Gastrocnemius medialis (tissue), 4 donors: ENCODE measurements at regions of chr14 and their contacts with region 1.

Region 1: DNA sequence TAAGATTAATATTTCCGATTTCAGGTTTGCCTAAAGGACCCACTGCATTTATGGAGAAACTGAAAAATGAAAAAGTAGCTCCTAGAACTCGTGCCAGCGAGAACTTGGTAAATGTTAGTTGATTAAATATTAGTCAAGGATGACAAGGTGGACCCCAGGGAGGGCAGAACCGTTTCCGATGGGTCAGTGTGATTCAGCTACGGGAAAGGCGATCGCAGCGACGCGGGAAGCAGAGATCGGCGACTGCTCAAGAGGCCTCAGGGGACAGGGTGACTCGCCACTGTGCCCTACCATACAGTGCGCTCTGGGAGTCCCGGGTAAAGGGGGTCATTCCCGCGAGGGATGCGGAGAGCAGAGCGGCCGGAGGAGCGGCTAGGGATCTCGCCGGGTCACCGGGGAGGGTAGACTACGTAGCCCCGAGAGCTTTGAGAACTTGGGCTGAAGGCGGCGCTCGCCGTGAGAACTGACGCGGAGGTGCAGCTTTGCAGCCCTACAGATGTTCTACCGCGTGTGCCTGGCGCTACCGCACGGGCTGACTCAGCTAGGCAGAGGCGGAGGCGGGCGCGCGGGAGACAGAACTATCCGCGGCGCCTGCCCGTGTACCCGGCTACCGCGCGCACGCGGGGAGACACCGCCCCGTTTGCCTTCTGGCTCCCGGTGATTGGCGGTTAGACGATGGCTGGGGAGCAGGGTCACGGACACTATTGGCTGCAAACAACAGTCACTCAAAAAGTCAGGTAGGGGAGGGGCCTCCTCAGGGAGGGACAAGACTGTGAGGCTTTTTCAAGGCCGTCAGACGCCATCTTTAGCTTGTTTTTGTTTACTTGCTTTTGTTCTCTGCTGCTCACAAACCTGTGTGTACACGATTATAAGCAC is 3.2 kb downstream of the C14orf93 start:
- DNase-seq: peak; percentile 98
- ATAC-seq: peak; percentile 98 to 99
- H3K4me3 ChIP-seq: peak overlapping the region; percentile 72 to 94 (median 78)
- H3K27ac ChIP-seq: peak overlapping the region; percentile 96 to 98 (median 96)
- H3K4me1 ChIP-seq: peaks cover 16 to 18% of the 10 kb centered on the region in 2 donors
- H3K27me3 ChIP-seq: no peaks in the 10 kb centered on the region
- CTCF ChIP-seq: peak in 1 of 5 experiments; percentile 27
- POLR2A ChIP-seq: peak; percentile 81 to 83

Region 2: GRCh38 chr14:22935156-22935555 is 71.6 kb before region 1 on chr14:
- in situ Hi-C with region 1: no loop called
- intact Hi-C with region 1: no loop called
- DNase-seq: no peak
- ATAC-seq: no peak
- H3K4me3 ChIP-seq: no peak overlapping the region
- H3K27ac ChIP-seq: no peak overlapping the region
- H3K4me1 ChIP-seq: no peaks in the 10 kb centered on the region
- H3K27me3 ChIP-seq: no peaks in the 10 kb centered on the region
- CTCF ChIP-seq: no peak
- POLR2A ChIP-seq: no peak

Region 3: DNA sequence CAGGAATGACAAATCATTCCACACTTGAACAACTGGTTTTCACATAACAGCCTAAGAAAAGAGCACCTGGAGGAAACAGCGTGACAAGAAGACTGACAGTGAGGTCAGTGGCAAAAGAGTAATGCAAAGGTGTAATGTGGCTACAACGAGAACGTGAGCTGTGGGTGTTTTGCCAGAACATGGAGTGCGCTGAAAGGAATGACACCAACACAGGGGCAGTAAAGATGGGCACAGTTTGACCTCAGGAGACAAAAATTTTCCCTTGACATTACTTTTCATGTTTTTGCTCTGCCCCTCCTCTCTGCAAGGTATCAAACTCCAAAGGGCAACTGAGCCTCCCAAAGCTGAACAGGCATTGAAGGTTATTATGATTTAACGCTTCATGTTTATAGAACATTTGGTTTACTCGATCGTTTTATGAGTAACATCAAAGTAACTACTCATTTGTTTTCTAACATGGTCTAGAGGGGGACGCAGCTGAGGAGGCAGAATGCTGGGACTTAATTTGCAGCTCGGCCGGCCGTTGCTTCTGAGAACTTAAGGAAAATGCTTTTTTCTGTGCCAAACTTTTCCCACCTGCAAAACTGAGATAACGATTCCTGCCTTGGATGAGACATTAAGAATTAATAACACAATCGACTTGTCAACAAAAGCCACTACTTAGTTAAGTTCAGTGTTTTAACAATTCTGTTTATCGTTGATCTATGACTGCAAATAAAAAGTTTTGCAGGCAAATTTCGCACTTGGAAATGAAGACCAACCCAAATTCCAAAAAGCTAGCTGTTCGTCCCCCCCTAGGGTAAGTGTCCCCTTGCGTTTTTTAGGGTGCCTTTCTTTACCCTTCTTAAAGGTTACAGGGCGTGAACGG is 50.8 kb before region 1 on chr14:
- in situ Hi-C with region 1: no loop called
- intact Hi-C with region 1: loop called (anchors 2 kb)
- DNase-seq: no peak
- ATAC-seq: no peak
- H3K4me3 ChIP-seq: peak overlapping the region; percentile 71 to 82 (median 82)
- H3K27ac ChIP-seq: peak overlapping the region; percentile 90 to 95 (median 94)
- H3K4me1 ChIP-seq: peaks cover 9 to 17% of the 10 kb centered on the region in 2 donors
- H3K27me3 ChIP-seq: no peaks in the 10 kb centered on the region
- CTCF ChIP-seq: no peak
- POLR2A ChIP-seq: no peak

Region 4: DNA sequence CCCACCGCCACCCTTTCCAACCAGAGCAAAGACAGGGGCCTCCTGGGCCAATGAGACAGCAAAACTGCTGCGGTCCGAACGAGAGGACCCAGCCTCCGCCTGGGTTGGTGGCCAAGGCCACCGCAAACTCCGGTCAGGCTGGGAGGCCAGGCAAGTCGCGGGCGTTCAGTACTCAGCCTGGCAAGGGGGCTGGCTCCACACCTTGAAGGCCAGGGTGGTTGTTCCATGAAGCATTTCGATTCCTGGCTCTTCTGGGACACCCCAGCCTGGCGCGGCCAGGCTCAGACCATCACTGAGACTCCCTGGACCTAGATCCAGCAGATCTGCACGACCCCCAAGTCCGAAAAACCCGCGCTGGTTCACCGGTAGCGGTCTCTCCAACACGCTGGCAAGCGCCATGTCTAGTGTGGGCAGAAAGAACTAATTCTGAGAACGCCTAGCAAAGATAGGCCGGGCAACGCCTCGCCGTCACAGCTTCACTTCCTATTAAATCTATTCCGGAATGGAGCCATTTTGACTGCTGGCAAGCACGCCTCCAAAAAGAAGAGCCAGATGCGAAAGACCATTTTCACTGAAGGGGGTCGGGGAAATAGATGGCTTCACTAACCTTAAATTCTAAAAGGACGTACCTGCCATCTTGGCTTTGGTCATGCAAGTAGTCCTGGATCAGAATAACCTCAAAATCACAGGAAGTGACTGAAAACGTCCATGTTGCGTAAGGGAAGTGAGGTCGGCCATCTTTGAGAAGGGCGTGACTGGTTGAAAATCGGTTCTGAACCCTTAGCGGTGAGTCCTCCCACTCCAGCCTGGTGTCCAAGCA is 27.9 kb after region 1 on chr14 and contains the start of gene PSMB5:
- in situ Hi-C with region 1: no loop called
- intact Hi-C with region 1: loop called (anchors 1 kb)
- DNase-seq: peak; percentile 89 to 93
- ATAC-seq: peak; percentile 98 to 99
- H3K4me3 ChIP-seq: peak within 1 kb of the TSS; percentile 74 to 97 (median 90)
- H3K27ac ChIP-seq: peak within 1 kb of the TSS; percentile 88 to 99 (median 98)
- H3K4me1 ChIP-seq: peaks cover 12 to 22% of the 10 kb centered on the region in 2 donors
- H3K27me3 ChIP-seq: no peaks in the 10 kb centered on the region
- CTCF ChIP-seq: peak in 1 of 5 experiments; percentile 29
- POLR2A ChIP-seq: peak; percentile 81 to 82
- total RNA-seq, gene PSMB5: 304 to 543 (median 486) TPM

Region 5: GRCh38 chr14:23057757-23058653 is 51.2 kb after region 1 on chr14:
- in situ Hi-C with region 1: no loop called
- intact Hi-C with region 1: no loop called
- DNase-seq: peak; percentile 64 to 75
- ATAC-seq: peak; percentile 86 to 89
- H3K4me3 ChIP-seq: peak overlapping the region; percentile 58 to 98 (median 71)
- H3K27ac ChIP-seq: peak overlapping the region in 3 of 4 donors; percentile 2 to 65 (median 35)
- H3K4me1 ChIP-seq: peaks cover 3 to 15% of the 10 kb centered on the region in 2 donors
- H3K27me3 ChIP-seq: no peaks in the 10 kb centered on the region
- CTCF ChIP-seq: peak; percentile 90 to 99 (median 96)
- POLR2A ChIP-seq: no peak